ENCODE measurements at regions of chr17 and their contacts with region 1.

Region 1: GRCh38 chr17:16353317-16354174 is at the start of gene CENPV:
- DNase-seq: no peak
- H3K4me3 ChIP-seq: peak within 1 kb of the TSS; percentile 50 to 63 (median 63)
- H3K27ac ChIP-seq: no peak within 1 kb of the TSS
- H3K4me1 ChIP-seq: peaks cover 17% of the 10 kb centered on the region
- H3K27me3 ChIP-seq: no peaks in the 10 kb centered on the region
- CTCF ChIP-seq: no peak
- total RNA-seq, gene CENPV: 5.5 to 7.8 TPM

Region 2: GRCh38 chr17:16285957-16286640 is 67.4 kb before region 1 on chr17:
- CTCF ChIA-PET with region 1: interaction called, 5 read pairs
- dilution Hi-C with region 1: loop called (anchors 5 kb)
- in situ Hi-C with region 1: no loop called
- intact Hi-C with region 1: loop called (anchors 10 kb)
- DNase-seq: peak; percentile 93
- H3K4me3 ChIP-seq: peak overlapping the region in 2 of 3 experiments; percentile 11 to 35
- H3K27ac ChIP-seq: peak overlapping the region; percentile 75
- H3K4me1 ChIP-seq: peaks cover 54% of the 10 kb centered on the region
- H3K27me3 ChIP-seq: no peaks in the 10 kb centered on the region
- CTCF ChIP-seq: peak; percentile 36 to 41

Region 3: GRCh38 chr17:16456742-16457316 is 103.3 kb after region 1 on chr17:
- CTCF ChIA-PET with region 1: no interaction called
- dilution Hi-C with region 1: loop called (anchors 5 kb)
- in situ Hi-C with region 1: no loop called
- intact Hi-C with region 1: no loop called
- DNase-seq: no peak
- H3K4me3 ChIP-seq: no peak overlapping the region
- H3K27ac ChIP-seq: no peak overlapping the region
- H3K4me1 ChIP-seq: peaks cover 11% of the 10 kb centered on the region
- H3K27me3 ChIP-seq: no peaks in the 10 kb centered on the region
- CTCF ChIP-seq: no peak

Region 4: GRCh38 chr17:16470265-16470664 is 116.7 kb after region 1 on chr17:
- CTCF ChIA-PET with region 1: no interaction called
- dilution Hi-C with region 1: no loop called
- in situ Hi-C with region 1: no loop called
- intact Hi-C with region 1: no loop called
- DNase-seq: no peak
- H3K4me3 ChIP-seq: no peak overlapping the region
- H3K27ac ChIP-seq: no peak overlapping the region
- H3K4me1 ChIP-seq: no peaks in the 10 kb centered on the region
- H3K27me3 ChIP-seq: peaks cover 6% of the 10 kb centered on the region
- CTCF ChIP-seq: no peak

Region 5: GRCh38 chr17:16922386-16923104 is 569.0 kb after region 1 on chr17:
- CTCF ChIA-PET with region 1: no interaction called
- dilution Hi-C with region 1: no loop called
- in situ Hi-C with region 1: no loop called
- intact Hi-C with region 1: no loop called
- DNase-seq: no peak
- H3K4me3 ChIP-seq: no peak overlapping the region
- H3K27ac ChIP-seq: no peak overlapping the region
- H3K4me1 ChIP-seq: no peaks in the 10 kb centered on the region
- H3K27me3 ChIP-seq: no peaks in the 10 kb centered on the region
- CTCF ChIP-seq: peak; percentile 5 to 35

Measured in mammary epithelial cell (primary cell).